Panc1 (cell line): ENCODE measurements at regions of chr15 and their contacts with region 1.

Region 1: GRCh38 chr15:74787251-74788041 is 5.6 kb downstream of the CSK start:
- DNase-seq: peak; percentile 24
- ATAC-seq: peak; percentile 87
- H3K4me3 ChIP-seq: no peak overlapping the region
- H3K27ac ChIP-seq: no peak overlapping the region
- H3K4me1 ChIP-seq: peaks cover 60% of the 10 kb centered on the region
- H3K27me3 ChIP-seq: no peaks in the 10 kb centered on the region
- CTCF ChIP-seq: peak; percentile 87

Region 2: GRCh38 chr15:74528876-74529275 is 258.6 kb before region 1 on chr15:
- CTCF ChIA-PET with region 1: no interaction called
- POLR2A ChIA-PET with region 1: interaction called, 12 read pairs
- in situ Hi-C with region 1: no loop called
- intact Hi-C with region 1: no loop called
- DNase-seq: no peak
- ATAC-seq: no peak
- H3K4me3 ChIP-seq: no peak overlapping the region
- H3K27ac ChIP-seq: no peak overlapping the region
- H3K4me1 ChIP-seq: peaks cover 9% of the 10 kb centered on the region; the same call in 1 of the 2 replicates
- H3K27me3 ChIP-seq: no peaks in the 10 kb centered on the region
- CTCF ChIP-seq: no peak

Region 3: GRCh38 chr15:74816808-74817674 is 29.6 kb after region 1 on chr15:
- CTCF ChIA-PET with region 1: interaction called, 14 read pairs
- POLR2A ChIA-PET with region 1: no interaction called
- in situ Hi-C with region 1: no loop called
- intact Hi-C with region 1: no loop called
- DNase-seq: no peak
- ATAC-seq: peak; percentile 74
- H3K4me3 ChIP-seq: no peak overlapping the region
- H3K27ac ChIP-seq: no peak overlapping the region
- H3K4me1 ChIP-seq: peaks cover 4% of the 10 kb centered on the region; the same call in 1 of the 2 replicates
- H3K27me3 ChIP-seq: no peaks in the 10 kb centered on the region
- CTCF ChIP-seq: no peak; the same call in 1 of the 2 replicates

Region 4: DNA sequence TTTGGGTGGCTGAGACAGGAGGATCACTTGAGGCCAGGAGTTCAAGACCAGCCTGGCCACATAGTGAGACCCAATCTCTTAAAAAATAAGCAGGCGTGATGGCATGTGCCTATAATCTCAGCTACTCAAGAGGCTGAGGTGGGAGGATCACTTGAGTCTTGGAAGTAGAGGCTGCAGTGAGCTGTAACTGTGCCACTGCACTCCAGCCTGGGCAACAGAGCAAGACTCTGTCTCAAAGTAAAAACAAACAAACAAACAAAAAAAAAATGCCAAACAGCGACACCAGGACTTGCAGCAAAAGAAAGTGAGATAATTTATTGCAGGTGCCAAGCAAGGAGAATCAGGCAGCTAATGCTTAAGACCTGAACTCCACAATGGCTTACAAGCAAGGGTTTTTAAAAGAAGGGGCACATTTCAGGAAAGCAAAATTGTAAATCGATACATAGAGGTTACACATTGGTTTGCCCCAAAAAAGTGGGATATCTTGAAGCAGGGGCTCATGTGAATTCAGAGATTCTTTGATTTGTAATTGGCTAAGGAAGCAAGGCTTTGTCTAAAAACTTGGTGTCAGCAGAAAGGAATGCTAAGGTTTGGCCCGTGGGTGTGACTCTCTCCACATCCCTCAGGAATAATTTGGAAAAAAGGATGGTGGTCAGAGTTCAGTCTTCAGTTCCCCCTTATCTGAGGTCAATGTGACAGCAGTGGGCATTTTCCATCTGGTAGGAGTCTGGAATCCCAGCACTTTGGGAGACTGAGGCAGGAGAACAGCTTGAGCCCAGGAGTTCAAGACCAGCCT is 97.2 kb after region 1 on chr15:
- CTCF ChIA-PET with region 1: no interaction called
- POLR2A ChIA-PET with region 1: interaction called, 11 read pairs
- in situ Hi-C with region 1: no loop called
- intact Hi-C with region 1: no loop called
- DNase-seq: no peak
- ATAC-seq: no peak
- H3K4me3 ChIP-seq: no peak overlapping the region
- H3K27ac ChIP-seq: no peak overlapping the region
- H3K4me1 ChIP-seq: peaks cover 5% of the 10 kb centered on the region
- H3K27me3 ChIP-seq: no peaks in the 10 kb centered on the region
- CTCF ChIP-seq: no peak

Region 5: DNA sequence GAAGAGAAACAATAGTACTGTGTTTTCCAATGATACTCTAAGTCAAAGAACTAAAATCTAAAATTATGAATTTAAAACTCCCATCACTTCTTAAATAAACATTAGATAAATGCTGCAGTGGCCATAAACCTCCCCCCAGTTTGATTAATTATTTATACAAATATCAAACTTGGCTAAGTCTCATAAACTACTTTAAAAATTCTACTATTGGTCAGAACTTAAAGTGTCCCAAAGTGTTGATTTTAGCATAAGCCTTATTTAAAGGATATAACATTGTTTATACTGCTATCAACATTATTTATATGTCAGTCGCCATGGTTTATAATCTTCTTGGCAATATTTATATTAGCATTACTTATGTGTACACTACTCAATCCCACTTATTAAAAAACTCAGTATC is 1985.3 kb after region 1 on chr15:
- CTCF ChIA-PET with region 1: no interaction called
- POLR2A ChIA-PET with region 1: interaction called, 19 read pairs
- in situ Hi-C with region 1: no loop called
- intact Hi-C with region 1: no loop called
- DNase-seq: no peak
- ATAC-seq: no peak
- H3K4me3 ChIP-seq: no peak overlapping the region
- H3K27ac ChIP-seq: no peak overlapping the region
- H3K4me1 ChIP-seq: no peaks in the 10 kb centered on the region
- H3K27me3 ChIP-seq: no peaks in the 10 kb centered on the region
- CTCF ChIP-seq: no peak